Panc1 (cell line): ENCODE measurements at regions of chr11 and their contacts with region 1.

Region 1: GRCh38 chr11:63564056-63564774 is 1.0 kb upstream of the PLAAT2 start:
- DNase-seq: no peak
- ATAC-seq: no peak
- H3K4me3 ChIP-seq: no peak overlapping the region
- H3K27ac ChIP-seq: no peak overlapping the region
- H3K4me1 ChIP-seq: peaks cover 7% of the 10 kb centered on the region
- H3K27me3 ChIP-seq: no peaks in the 10 kb centered on the region
- CTCF ChIP-seq: no peak

Region 2: DNA sequence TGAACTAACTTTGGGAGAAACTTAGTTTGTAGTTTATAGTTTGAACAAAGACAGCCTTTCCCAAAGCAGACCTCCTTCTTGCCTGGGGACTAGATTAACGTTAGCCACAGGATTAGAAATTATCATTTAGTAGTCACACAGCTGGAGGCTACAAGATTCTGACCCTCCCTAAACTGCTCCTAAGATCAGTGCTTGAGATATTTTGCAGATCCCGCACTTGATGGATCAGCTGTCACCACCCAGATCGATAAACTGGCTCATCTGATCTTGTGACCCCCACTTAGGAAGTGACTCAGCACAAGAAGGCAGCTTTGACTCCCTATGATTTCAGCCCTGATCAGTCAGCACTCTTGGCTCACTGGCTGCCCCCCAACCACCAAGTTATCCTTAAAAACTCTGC is 421.8 kb before region 1 on chr11:
- CTCF ChIA-PET with region 1: no interaction called
- POLR2A ChIA-PET with region 1: interaction called, 13 read pairs
- in situ Hi-C with region 1: no loop called
- intact Hi-C with region 1: no loop called
- DNase-seq: no peak
- ATAC-seq: no peak
- H3K4me3 ChIP-seq: no peak overlapping the region
- H3K27ac ChIP-seq: no peak overlapping the region
- H3K4me1 ChIP-seq: no peaks in the 10 kb centered on the region
- H3K27me3 ChIP-seq: peaks cover 9% of the 10 kb centered on the region
- CTCF ChIP-seq: no peak

Region 3: DNA sequence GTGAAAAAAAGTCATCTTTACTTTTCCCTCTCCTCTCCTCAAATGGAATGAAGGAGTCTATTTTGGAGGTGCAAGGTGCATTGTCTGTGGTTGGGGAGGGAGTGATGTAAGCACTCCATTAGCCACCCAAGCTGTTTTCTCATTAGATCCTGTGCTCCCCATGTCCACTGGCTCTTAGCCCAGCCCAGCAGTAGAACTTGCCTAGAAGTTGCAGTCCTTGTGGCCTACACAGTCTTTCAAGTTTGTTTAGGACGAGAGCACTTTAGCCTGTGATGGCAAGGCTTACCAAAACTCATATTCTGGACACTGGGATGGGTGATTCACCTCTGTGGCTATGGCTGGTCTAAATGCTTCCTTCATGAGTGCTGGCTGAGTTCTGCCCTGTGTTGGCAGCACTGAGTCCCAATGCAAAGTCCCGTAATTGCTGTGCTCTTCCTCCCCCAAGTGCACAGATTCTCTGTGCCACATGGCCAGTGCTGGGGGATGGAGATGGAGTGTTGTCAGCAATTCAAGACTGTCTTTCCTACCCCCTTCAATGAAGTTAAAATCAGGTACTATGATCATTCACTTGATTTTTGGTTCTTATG is 336.6 kb before region 1 on chr11:
- CTCF ChIA-PET with region 1: no interaction called
- POLR2A ChIA-PET with region 1: no interaction called
- in situ Hi-C with region 1: no loop called
- intact Hi-C with region 1: no loop called
- DNase-seq: no peak
- ATAC-seq: no peak
- H3K4me3 ChIP-seq: no peak overlapping the region
- H3K27ac ChIP-seq: no peak overlapping the region
- H3K4me1 ChIP-seq: no peaks in the 10 kb centered on the region
- H3K27me3 ChIP-seq: 0 out of 2 replicates have a peak, but pooled peaks cover 3% of the 10 kb centered on the region
- CTCF ChIP-seq: no peak

Region 4: GRCh38 chr11:63610604-63611394 is 46.6 kb after region 1 on chr11:
- CTCF ChIA-PET with region 1: interaction called, 13 read pairs
- POLR2A ChIA-PET with region 1: no interaction called
- in situ Hi-C with region 1: no loop called
- intact Hi-C with region 1: no loop called
- DNase-seq: no peak
- ATAC-seq: no peak
- H3K4me3 ChIP-seq: peak overlapping the region in 1 of 2 experiments; percentile 17; a peak in 1 of 4 replicates
- H3K27ac ChIP-seq: no peak overlapping the region; the same call in 1 of the 2 replicates
- H3K4me1 ChIP-seq: peaks cover 30% of the 10 kb centered on the region
- H3K27me3 ChIP-seq: no peaks in the 10 kb centered on the region
- CTCF ChIP-seq: no peak